AG04449 (cell line): ENCODE measurements at regions of chr14 and their contacts with region 1.

Region 1: GRCh38 chr14:77151918-77152588 is 10.5 kb upstream of the ZDHHC22 start:
- DNase-seq: no peak
- H3K4me3 ChIP-seq: no peak overlapping the region
- CTCF ChIP-seq: no peak

Region 2: GRCh38 chr14:77133720-77134338 is 18.2 kb before region 1 on chr14:
- CTCF ChIA-PET with region 1: interaction called, 11 read pairs
- POLR2A ChIA-PET with region 1: no interaction called
- DNase-seq: no peak
- H3K4me3 ChIP-seq: no peak overlapping the region
- CTCF ChIP-seq: no peak

Region 3: GRCh38 chr14:77141214-77142004 is 10.6 kb before region 1 on chr14 and contains the start of gene ZDHHC22:
- CTCF ChIA-PET with region 1: interaction called, 28 read pairs
- POLR2A ChIA-PET with region 1: no interaction called
- DNase-seq: no peak
- H3K4me3 ChIP-seq: peak within 1 kb of the TSS; percentile 38
- CTCF ChIP-seq: peak; percentile 46

Region 4: DNA sequence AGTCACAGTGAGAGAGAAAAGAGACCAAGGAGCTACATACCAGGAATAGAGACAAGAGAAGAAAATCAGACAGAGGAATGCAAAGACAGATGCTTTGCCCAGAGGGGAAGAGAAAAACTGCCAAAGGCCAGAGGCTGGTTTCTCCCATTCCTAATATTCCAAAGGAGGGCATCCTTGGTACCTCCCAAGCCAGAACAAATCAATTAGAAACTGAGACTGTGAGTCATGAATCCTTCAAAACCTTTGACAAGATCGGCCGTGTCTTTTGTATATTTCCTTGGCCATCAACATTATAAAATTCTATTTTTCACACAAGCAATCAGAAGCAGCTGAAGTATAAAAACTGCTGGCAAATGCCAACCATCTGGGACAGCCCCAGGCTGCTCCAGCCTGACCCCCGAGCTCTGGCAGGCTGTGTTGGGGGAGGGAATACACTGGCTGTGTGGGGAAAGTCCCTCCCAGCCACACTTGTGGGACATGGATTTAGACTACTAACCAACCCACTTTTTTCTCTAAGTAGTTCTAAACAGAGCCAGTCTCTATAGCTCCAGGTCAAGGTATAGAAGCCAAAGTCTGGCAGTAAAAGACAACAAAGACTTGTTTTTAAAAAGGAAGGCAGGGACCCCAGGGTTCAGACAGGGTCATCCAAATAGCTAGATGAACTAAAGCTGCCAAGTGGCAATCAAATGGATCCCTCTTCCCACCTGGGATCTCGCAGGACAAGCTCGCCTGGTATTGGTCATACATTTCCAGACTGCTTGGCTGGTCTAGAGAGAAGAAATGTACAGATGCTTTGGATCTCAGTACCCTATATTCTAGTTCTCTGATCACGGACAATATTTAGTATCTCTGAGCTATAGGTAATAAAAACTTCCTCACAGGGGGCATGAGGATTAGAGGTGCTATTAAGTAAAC is 155.1 kb after region 1 on chr14:
- CTCF ChIA-PET with region 1: interaction called, 179 read pairs
- POLR2A ChIA-PET with region 1: no interaction called
- DNase-seq: no peak
- H3K4me3 ChIP-seq: no peak overlapping the region; the same call in 1 of the 2 replicates
- CTCF ChIP-seq: no peak